Lower leg skin (tissue), 4 donors: ENCODE measurements at regions of chr10 and their contacts with region 1.

Region 1: GRCh38 chr10:60466267-60467201 is 76.9 kb upstream of the ANK3 start:
- DNase-seq: no peak
- H3K4me3 ChIP-seq: no peak overlapping the region
- CTCF ChIP-seq: no peak
- POLR2A ChIP-seq: no peak

Region 2: DNA sequence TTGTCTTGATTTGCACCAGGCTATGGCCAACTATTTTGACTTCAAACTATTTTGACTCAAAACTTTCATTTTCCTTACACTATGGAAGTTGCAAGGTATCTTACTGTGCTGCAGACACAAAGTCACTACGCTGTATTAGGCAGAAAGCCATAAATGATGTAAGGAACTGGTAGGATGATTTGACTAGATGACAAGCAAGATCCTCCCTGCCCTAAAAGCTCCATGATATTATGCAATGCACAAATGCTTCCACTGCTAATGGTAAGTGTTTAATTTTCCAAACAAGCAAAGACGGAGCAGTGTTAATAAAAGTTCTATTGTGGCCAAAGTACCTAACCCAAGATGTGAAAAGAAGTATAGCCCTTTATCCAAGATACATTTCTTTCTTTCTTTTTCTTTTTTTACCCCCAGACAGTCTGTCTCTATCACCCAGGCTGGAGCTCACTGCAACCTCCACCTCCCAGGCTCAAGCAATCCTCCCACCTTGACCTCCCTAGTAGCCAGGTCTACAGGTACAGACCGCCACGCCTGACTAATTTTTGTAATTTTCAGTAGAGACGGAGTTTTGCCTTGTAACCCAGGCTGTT is 175.1 kb before region 1 on chr10:
- intact Hi-C with region 1: no loop called
- DNase-seq: no peak
- H3K4me3 ChIP-seq: no peak overlapping the region
- CTCF ChIP-seq: no peak
- POLR2A ChIP-seq: no peak

Region 3: DNA sequence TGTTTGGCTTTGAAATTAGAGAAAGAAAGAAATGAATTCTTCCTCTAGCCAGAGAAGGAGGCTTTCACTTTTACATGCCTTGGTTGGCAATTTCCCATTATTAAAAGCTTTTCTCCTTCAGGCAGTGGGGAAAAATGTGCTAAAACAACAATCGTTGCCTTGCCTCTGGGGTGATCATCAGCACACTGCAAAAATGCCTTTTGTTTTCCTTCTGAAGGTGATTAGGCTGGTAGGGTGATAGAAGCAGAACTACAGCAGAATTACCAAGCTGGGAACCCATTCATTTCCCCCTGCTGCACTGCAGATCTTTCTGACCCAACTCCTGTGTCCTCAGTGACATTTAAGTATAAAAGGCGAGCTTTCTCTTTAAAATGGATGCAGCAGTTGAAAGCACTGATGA is 99.1 kb before region 1 on chr10:
- intact Hi-C with region 1: loop called (anchors 2 kb)
- DNase-seq: no peak
- H3K4me3 ChIP-seq: no peak overlapping the region
- CTCF ChIP-seq: no peak
- POLR2A ChIP-seq: no peak